HEK293T (cell line): ENCODE measurements at regions of chr10 and their contacts with region 1.

Region 1: GRCh38 chr10:77846718-77847630 is 79.6 kb downstream of the DLG5 start:
- DNase-seq: peak; percentile 84

Region 2: GRCh38 chr10:77974396-77975074 is 127.6 kb after region 1 on chr10:
- CTCF ChIA-PET with region 1: interaction called, 12 read pairs
- POLR2A ChIA-PET with region 1: no interaction called
- DNase-seq: peak; percentile 53